Upper lobe of right lung (tissue), 1 donor: ENCODE measurements at regions of chr22 and their contacts with region 1.

Region 1: DNA sequence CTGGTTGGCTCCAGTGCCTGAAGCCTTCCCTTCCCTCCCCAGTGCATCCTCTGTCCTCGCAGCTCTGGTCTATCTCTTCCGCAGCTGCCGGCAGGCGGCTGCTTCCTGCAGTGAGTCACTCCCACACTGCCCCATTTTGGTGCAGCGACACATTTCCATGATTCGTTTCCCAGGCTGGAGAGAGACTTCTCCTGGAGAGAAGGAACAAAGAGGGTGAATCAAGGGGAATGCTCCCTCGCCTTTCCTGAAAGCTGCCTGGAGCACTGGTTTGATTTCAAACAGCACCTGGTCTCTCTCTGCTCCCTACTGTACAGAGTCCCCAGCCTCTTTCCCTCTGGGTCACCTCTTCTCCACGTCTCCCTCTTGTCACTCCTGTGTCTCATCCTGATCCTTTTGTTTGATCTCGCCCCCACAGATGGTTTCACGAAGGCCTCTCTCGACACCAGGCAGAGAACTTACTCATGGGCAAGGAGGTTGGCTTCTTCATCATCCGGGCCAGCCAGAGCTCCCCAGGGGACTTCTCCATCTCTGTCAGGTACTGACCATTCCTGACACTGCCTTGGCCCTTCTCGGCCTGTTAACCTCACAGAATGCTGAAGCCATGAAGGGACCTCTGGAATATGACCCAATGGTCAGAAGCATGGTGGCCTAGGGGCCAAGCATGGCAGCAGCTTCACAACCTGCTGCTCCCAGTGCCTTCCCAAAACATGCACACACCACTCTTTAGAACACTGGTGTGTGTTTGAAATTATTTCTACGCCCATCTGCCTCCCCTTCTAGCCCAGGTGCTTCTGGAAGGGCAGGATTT is at the start of gene TMA7B:
- DNase-seq: no peak
- ATAC-seq: peak; percentile 52
- H3K4me3 ChIP-seq: no peak within 1 kb of the TSS
- H3K27ac ChIP-seq: no peak within 1 kb of the TSS
- H3K4me1 ChIP-seq: peaks cover 2% of the 10 kb centered on the region
- H3K27me3 ChIP-seq: peaks cover 23% of the 10 kb centered on the region
- CTCF ChIP-seq: peak; percentile 24
- total RNA-seq, gene TMA7B: 0.69 TPM

Region 2: DNA sequence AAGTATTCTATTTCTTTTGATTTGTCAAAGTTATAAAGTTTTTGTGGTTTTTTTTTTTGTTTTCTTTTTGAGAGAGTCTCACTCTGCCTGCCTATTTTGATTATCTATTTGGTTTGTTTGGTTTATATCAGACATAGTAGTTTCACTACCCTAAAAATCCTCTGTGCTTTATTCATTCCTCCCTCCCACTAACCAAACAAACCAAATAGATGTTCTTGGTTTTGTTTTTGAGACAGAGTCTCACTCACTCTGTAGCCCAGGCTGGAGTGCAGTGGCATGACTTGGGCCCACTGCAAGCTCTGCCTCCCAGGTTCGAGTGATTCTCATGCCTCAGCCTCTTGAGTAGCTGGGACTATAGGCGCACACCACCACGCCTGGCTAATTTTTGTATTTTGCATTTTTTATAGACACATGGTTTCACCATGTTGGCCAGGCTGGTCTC is 134.2 kb before region 1 on chr22:
- intact Hi-C with region 1: no loop called
- DNase-seq: no peak
- ATAC-seq: no peak
- H3K4me3 ChIP-seq: no peak overlapping the region
- H3K27ac ChIP-seq: no peak overlapping the region
- H3K4me1 ChIP-seq: no peaks in the 10 kb centered on the region
- H3K27me3 ChIP-seq: peaks cover 35% of the 10 kb centered on the region
- CTCF ChIP-seq: no peak

Region 3: DNA sequence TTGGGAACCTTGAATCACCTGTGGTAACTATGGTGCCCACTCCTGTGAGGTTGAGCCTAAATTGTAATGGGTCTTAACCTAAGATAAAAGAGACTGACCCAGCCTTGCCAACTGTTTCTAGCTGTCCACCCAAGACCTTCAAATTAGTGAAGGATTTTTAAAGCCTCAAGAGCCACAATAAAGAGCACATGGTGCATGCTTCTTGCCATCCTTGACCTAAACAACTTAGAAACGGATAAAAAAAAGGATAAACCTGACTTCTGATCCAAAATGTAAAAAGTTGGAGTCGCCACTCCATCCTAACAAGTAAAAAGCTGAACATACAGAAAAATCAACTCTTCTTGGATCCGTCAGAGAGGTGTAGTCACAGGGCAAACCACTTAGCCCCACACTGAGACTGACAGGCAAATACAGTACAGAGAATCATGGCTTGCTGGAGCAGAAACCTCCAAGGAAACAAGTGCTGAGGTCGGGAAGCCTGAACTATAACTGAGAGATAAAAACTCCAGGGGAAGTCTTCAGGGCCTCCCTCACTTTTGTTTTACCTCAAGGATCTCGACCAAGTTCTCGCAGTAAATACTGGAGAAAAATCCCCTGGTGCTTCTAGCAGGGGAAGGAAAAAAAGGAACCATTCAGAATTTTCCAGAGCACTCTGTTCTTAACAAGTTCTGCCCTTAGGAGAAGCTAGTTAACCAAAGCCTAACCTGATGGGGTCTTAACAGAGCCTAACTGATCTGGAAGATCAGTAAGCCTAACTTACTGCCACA is 82.6 kb before region 1 on chr22:
- intact Hi-C with region 1: no loop called
- DNase-seq: no peak
- ATAC-seq: no peak
- H3K4me3 ChIP-seq: no peak overlapping the region
- H3K27ac ChIP-seq: no peak overlapping the region
- H3K4me1 ChIP-seq: no peaks in the 10 kb centered on the region
- H3K27me3 ChIP-seq: peaks cover 9% of the 10 kb centered on the region
- CTCF ChIP-seq: no peak

Region 4: DNA sequence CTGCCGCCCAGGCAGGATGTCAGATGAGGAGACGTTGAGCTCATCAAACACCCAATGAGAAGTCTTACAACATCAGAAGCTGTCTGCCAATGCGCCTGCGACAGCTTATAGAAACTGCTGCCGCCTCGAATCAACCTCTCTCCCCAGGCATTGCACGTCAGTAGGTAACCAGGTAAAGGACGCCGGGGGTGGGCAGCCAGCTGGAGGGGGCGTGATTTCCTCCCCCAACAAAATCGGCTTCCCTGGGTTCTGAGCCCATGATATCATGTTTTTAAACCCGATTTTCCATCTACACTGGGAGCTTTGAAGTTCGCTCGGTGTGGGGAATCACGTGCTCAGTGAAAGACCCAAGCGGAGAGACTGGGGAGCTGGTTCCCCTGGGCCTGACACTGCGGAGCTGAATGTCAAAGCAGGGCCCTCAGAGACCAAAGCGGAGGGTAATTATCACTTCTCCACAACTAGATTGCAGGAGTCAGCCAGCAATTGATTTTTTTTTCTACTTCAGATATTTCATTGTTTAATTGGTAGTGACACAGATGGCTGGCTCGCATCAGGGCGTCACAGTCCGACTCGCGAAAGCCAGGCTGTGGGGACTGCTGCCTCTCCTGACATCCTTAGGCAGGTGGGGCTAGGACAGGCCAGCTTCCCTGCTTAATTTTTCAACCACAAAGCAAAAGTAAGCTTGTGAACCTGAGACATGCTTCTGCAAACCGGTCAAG is 50.3 kb after region 1 on chr22:
- intact Hi-C with region 1: loop called (anchors 10 kb)
- DNase-seq: no peak
- ATAC-seq: no peak
- H3K4me3 ChIP-seq: no peak overlapping the region
- H3K27ac ChIP-seq: no peak overlapping the region
- H3K4me1 ChIP-seq: no peaks in the 10 kb centered on the region
- H3K27me3 ChIP-seq: peaks cover 42% of the 10 kb centered on the region
- CTCF ChIP-seq: no peak